ENCODE measurements at regions of chr20 and their contacts with region 1.

Region 1: DNA sequence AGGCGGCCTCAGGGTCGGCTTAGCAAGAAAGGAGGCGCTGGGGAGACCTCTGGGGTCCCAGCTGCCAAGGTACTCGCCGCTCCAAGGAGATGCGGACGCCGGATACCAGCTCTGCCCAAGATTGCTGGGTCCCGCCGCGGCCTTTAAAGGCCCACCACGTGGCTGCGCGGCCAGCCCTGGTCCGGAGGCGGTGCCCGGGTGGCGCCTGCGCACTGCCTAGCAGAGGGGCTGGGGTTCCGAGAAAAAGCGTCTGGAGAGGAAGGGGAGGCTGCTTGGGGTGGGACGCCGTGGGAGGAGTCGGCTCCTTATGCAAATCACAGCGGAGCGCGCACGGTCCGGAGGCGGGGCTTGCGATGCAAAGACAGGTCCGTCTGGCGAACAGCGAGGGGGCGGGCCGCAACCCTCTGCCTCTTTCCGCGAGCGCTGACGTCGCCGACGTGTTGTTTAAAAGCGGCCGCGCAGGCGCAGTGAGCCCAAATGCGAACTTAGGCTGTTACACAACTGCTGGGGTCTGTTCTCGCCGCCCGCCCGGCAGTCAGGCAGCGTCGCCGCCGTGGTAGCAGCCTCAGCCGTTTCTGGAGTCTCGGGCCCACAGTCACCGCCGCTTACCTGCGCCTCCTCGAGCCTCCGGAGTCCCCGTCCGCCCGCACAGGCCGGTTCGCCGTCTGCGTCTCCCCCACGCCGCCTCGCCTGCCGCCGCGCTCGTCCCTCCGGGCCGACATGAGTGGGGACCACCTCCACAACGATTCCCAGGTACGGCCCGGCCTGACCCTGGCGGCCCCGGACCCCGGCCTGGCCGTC is at the start of gene TOP1:
- DNase-seq: peak; percentile 99 to 100 (median 100)
- ATAC-seq: peak; percentile 97
- H3K4me3 ChIP-seq: peak within 1 kb of the TSS; percentile 72 to 76
- H3K4me3 Mint-ChIP-seq: peak within 1 kb of the TSS; percentile 92
- H3K27ac ChIP-seq: peak within 1 kb of the TSS; percentile 94 to 95
- H3K27ac Mint-ChIP-seq: peak within 1 kb of the TSS; percentile 99
- H3K4me1 ChIP-seq: peaks cover 45% of the 10 kb centered on the region
- H3K4me1 Mint-ChIP-seq: peaks cover 46% of the 10 kb centered on the region
- H3K27me3 ChIP-seq: no peaks in the 10 kb centered on the region
- H3K27me3 Mint-ChIP-seq: no peaks in the 10 kb centered on the region
- CTCF ChIP-seq: no peak
- total RNA-seq, gene TOP1: 58.5 to 61.1 TPM

Region 2: GRCh38 chr20:40080041-40080652 is 948.4 kb before region 1 on chr20:
- CTCF ChIA-PET with region 1: no interaction called
- POLR2A ChIA-PET with region 1: no interaction called
- intact Hi-C with region 1: no loop called
- DNase-seq: no peak
- ATAC-seq: no peak
- H3K4me3 ChIP-seq: no peak overlapping the region
- H3K4me3 Mint-ChIP-seq: no peak overlapping the region
- H3K27ac ChIP-seq: no peak overlapping the region
- H3K27ac Mint-ChIP-seq: no peak overlapping the region
- H3K4me1 ChIP-seq: no peaks in the 10 kb centered on the region
- H3K4me1 Mint-ChIP-seq: no peaks in the 10 kb centered on the region
- H3K27me3 ChIP-seq: no peaks in the 10 kb centered on the region
- H3K27me3 Mint-ChIP-seq: peaks cover 2% of the 10 kb centered on the region
- CTCF ChIP-seq: no peak

Region 3: DNA sequence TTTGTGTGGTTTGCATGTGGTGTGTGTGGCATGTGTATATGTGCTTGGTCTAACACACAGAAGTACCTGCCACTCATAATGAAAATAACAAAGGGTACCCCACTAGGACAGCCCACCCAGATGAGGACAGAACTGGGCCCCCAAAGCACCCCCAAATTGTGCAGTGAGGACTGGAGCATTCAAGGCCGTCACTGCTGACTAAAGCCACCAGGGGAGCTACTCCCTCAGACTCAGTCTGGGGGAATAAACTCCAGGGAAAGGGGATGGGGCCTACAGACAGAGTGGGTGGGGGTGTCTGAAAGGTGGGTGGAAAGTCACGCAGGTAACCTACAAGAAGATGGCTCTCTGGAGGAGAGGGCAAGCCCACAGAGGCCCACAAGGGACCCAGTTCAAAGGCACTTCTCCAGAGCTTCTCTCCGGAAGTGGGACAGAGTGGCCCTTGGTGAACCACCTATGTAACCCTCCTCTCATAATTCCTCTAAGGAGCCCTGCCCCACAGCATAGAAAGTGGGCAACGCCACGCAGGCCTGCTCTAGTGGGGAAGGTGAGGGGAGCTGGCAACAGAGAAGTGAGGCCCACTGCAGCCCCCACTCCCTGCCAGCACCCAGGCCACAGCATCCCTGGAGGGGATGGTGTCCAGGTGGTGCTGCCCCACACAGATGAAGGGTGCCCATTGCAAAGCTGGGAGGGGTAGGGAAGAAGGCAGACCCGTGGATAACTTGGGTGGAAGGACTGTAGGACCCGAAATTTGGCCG is 216.7 kb before region 1 on chr20:
- CTCF ChIA-PET with region 1: no interaction called
- POLR2A ChIA-PET with region 1: no interaction called
- intact Hi-C with region 1: no loop called
- DNase-seq: no peak
- ATAC-seq: no peak
- H3K4me3 ChIP-seq: no peak overlapping the region
- H3K4me3 Mint-ChIP-seq: no peak overlapping the region
- H3K27ac ChIP-seq: no peak overlapping the region
- H3K27ac Mint-ChIP-seq: no peak overlapping the region
- H3K4me1 ChIP-seq: no peaks in the 10 kb centered on the region
- H3K4me1 Mint-ChIP-seq: no peaks in the 10 kb centered on the region
- H3K27me3 ChIP-seq: no peaks in the 10 kb centered on the region
- H3K27me3 Mint-ChIP-seq: no peaks in the 10 kb centered on the region
- CTCF ChIP-seq: no peak

Region 4: GRCh38 chr20:41011551-41012067 is 16.9 kb before region 1 on chr20:
- CTCF ChIA-PET with region 1: no interaction called
- POLR2A ChIA-PET with region 1: no interaction called
- intact Hi-C with region 1: no loop called
- DNase-seq: peak in 1 of 9 experiments; percentile 41
- ATAC-seq: peak; percentile 40
- H3K4me3 ChIP-seq: no peak overlapping the region
- H3K4me3 Mint-ChIP-seq: no peak overlapping the region
- H3K27ac ChIP-seq: no peak overlapping the region
- H3K27ac Mint-ChIP-seq: no peak overlapping the region
- H3K4me1 ChIP-seq: peaks cover 28% of the 10 kb centered on the region
- H3K4me1 Mint-ChIP-seq: peaks cover 29% of the 10 kb centered on the region
- H3K27me3 ChIP-seq: no peaks in the 10 kb centered on the region
- H3K27me3 Mint-ChIP-seq: no peaks in the 10 kb centered on the region
- CTCF ChIP-seq: no peak

Region 5: GRCh38 chr20:41038878-41039404 is 10.4 kb after region 1 on chr20:
- CTCF ChIA-PET with region 1: interaction called, 3 read pairs
- POLR2A ChIA-PET with region 1: interaction called, 5 read pairs
- intact Hi-C with region 1: loop called in 1 of 2 experiments (anchors 1 kb)
- DNase-seq: no peak
- ATAC-seq: peak; percentile 47
- H3K4me3 ChIP-seq: no peak overlapping the region
- H3K4me3 Mint-ChIP-seq: no peak overlapping the region
- H3K27ac ChIP-seq: no peak overlapping the region
- H3K27ac Mint-ChIP-seq: no peak overlapping the region
- H3K4me1 ChIP-seq: peaks cover 65% of the 10 kb centered on the region
- H3K4me1 Mint-ChIP-seq: peaks cover 90% of the 10 kb centered on the region
- H3K27me3 ChIP-seq: no peaks in the 10 kb centered on the region
- H3K27me3 Mint-ChIP-seq: no peaks in the 10 kb centered on the region
- CTCF ChIP-seq: no peak

Region 6: DNA sequence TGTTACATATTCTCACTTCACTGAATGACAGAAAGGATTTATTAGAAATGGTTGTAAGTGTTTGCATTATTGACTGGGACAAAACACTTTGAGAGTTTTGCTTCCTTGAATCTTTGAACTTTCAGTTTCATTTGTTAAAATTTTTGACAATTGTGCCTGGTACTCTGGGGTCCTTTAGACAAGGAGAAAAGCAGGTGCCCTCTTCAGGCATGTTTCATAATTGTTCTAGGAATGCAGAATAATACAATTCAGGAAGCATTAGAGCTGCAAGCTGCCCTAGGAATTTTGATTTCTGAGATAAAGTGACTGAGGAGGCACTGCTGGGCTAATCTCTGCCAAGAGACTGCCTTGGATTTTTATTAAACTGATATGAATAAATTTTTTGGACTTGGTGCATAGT is 49.8 kb after region 1 on chr20:
- CTCF ChIA-PET with region 1: no interaction called
- POLR2A ChIA-PET with region 1: no interaction called
- intact Hi-C with region 1: loop called in 1 of 2 experiments (anchors 5 kb)
- DNase-seq: peak in 2 of 9 experiments; percentile 30 to 52
- ATAC-seq: peak; percentile 46
- H3K4me3 ChIP-seq: no peak overlapping the region
- H3K4me3 Mint-ChIP-seq: peak overlapping the region; percentile 43
- H3K27ac ChIP-seq: no peak overlapping the region
- H3K27ac Mint-ChIP-seq: peak overlapping the region; percentile 71
- H3K4me1 ChIP-seq: peaks cover 28% of the 10 kb centered on the region
- H3K4me1 Mint-ChIP-seq: peaks cover 65% of the 10 kb centered on the region
- H3K27me3 ChIP-seq: no peaks in the 10 kb centered on the region
- H3K27me3 Mint-ChIP-seq: no peaks in the 10 kb centered on the region
- CTCF ChIP-seq: no peak

Region 7: GRCh38 chr20:41317536-41318270 is 289.2 kb after region 1 on chr20 and contains the start of gene ZHX3:
- CTCF ChIA-PET with region 1: no interaction called
- POLR2A ChIA-PET with region 1: no interaction called
- intact Hi-C with region 1: loop called (anchors 2 kb)
- DNase-seq: peak; percentile 93 to 99 (median 97)
- ATAC-seq: peak; percentile 95
- H3K4me3 ChIP-seq: peak within 1 kb of the TSS; percentile 67 to 85
- H3K4me3 Mint-ChIP-seq: peak within 1 kb of the TSS; percentile 80
- H3K27ac ChIP-seq: peak within 1 kb of the TSS; percentile 47 to 57
- H3K27ac Mint-ChIP-seq: peak within 1 kb of the TSS; percentile 57
- H3K4me1 ChIP-seq: peaks cover 11% of the 10 kb centered on the region
- H3K4me1 Mint-ChIP-seq: peaks cover 28% of the 10 kb centered on the region
- H3K27me3 ChIP-seq: no peaks in the 10 kb centered on the region
- H3K27me3 Mint-ChIP-seq: no peaks in the 10 kb centered on the region
- CTCF ChIP-seq: no peak
- total RNA-seq, gene ZHX3: 4.4 to 4.7 TPM

Region 8: DNA sequence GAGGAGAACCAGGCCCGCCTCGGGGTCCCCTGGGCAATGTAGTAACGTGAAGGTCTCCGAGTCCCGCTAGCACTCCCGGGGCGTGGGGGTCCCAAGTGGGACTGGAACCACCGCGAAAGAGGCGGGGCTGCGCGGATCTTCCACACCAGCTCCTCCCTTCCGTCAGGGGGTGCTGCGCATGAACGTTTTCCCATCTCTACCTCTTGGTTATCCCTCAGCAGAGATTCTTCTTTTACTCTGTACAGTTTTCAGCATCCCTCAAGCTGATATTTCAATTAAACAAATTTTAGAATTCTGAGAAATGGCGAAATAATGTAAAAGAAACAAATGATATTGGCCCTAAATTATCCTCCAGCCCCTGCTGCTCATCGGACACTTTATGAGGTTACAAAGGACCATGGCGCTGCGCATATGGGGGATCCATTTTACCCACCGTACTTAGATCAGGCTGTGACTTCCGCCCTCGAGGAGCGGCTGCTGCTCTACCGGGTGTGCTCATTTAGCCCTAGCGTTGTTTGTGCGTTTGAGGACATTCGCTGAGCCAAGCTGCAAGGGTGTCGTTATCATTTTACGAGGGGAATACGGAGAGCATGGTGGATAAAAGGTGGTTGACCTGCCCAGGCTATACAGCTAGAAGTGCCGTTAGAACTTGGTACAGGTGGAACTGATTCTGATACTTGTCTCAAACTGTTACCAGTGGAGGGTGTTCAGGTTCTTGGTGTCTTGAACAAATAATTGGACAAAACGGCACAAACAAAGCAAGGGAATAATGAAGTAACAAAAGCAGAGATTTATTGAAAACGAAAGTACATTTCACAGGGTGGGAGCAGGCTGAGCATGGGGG is 664.8 kb after region 1 on chr20:
- CTCF ChIA-PET with region 1: no interaction called
- POLR2A ChIA-PET with region 1: no interaction called
- intact Hi-C with region 1: loop called (anchors 5 kb)
- DNase-seq: peak; percentile 60 to 94 (median 80)
- ATAC-seq: peak; percentile 86
- H3K4me3 ChIP-seq: peak overlapping the region; percentile 92 to 97
- H3K4me3 Mint-ChIP-seq: peak overlapping the region; percentile 87
- H3K27ac ChIP-seq: peak overlapping the region; percentile 86 to 91
- H3K27ac Mint-ChIP-seq: peak overlapping the region; percentile 93
- H3K4me1 ChIP-seq: peaks cover 10% of the 10 kb centered on the region
- H3K4me1 Mint-ChIP-seq: peaks cover 18% of the 10 kb centered on the region
- H3K27me3 ChIP-seq: no peaks in the 10 kb centered on the region
- H3K27me3 Mint-ChIP-seq: peaks cover 4% of the 10 kb centered on the region
- CTCF ChIP-seq: peak; percentile 40